ENCODE measurements at regions of chr1 and their contacts with region 1.

Region 1: DNA sequence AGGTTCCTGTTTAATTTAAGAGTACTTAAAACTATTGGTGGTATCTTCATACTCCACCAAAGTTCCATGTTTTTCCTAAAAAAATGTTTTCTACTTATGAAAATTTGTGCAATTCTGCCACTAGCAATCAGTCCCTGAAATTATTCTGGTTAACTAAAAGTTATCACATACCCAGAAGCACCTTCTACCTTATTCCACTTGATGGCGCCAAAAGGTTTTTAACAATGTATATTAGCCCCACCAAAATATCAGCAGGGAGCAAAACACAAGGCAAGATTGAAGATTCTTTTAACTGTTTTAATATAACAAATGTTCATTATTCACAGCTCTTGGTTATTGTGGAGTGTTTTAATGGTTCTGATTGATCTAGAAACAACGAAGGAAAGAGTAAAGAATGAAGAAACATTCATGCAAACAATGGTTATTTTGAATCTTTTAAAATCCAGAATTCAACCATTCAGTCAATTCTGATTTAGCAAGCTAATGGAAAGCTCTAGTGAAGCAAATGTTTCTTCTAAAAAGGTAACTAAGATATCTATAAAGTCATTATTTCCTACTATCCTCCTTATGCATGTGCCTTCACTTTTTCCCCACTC is 67.2 kb downstream of the TTLL7 start:
- DNase-seq: no peak
- ATAC-seq: no peak
- H3K4me3 ChIP-seq: no peak overlapping the region
- H3K27ac ChIP-seq: no peak overlapping the region
- H3K4me1 ChIP-seq: peaks cover 3 to 4% of the 10 kb centered on the region in 2 donors
- H3K27me3 ChIP-seq: no peaks in the 10 kb centered on the region

Region 2: GRCh38 chr1:83606416-83606955 is 325.3 kb before region 1 on chr1:
- intact Hi-C with region 1: no loop called
- DNase-seq: no peak
- ATAC-seq: no peak
- H3K4me3 ChIP-seq: no peak overlapping the region
- H3K27ac ChIP-seq: no peak overlapping the region
- H3K4me1 ChIP-seq: no peaks in the 10 kb centered on the region
- H3K27me3 ChIP-seq: no peaks in the 10 kb centered on the region

Region 3: DNA sequence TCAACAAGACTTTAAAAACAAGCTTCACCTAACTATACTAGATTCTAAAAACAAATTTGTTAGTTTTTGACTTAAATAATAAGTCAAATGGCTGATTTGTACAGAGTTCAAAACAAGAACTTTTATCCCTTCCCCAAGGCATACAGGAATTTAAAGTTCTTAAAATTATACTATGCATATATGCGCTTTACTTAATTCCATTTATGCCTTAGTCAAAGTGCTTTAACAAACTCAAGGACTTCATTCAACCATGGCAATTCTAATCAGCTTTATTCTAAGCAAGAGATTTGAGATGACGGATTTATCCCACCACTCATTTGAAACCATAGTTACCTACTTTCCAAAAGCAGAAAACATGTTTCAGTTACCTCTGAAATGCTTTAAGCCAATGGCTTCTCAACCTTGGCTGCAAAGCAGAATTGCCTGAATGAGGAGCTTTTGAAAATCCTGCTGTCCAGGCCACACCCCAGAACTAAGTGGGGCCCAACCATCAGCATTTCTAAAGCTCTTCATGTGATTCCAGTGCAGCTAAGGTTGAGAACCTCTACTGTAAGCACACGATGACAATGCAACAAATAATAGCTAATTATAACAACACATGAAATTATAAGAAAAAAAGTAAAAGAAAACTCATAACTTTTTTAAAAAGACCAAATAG is 22.5 kb after region 1 on chr1:
- intact Hi-C with region 1: no loop called
- DNase-seq: no peak
- ATAC-seq: no peak
- H3K4me3 ChIP-seq: no peak overlapping the region
- H3K27ac ChIP-seq: peak overlapping the region in 1 of 2 donors; percentile 51
- H3K4me1 ChIP-seq: peaks cover 1 to 6% of the 10 kb centered on the region in 2 donors
- H3K27me3 ChIP-seq: no peaks in the 10 kb centered on the region

Region 4: DNA sequence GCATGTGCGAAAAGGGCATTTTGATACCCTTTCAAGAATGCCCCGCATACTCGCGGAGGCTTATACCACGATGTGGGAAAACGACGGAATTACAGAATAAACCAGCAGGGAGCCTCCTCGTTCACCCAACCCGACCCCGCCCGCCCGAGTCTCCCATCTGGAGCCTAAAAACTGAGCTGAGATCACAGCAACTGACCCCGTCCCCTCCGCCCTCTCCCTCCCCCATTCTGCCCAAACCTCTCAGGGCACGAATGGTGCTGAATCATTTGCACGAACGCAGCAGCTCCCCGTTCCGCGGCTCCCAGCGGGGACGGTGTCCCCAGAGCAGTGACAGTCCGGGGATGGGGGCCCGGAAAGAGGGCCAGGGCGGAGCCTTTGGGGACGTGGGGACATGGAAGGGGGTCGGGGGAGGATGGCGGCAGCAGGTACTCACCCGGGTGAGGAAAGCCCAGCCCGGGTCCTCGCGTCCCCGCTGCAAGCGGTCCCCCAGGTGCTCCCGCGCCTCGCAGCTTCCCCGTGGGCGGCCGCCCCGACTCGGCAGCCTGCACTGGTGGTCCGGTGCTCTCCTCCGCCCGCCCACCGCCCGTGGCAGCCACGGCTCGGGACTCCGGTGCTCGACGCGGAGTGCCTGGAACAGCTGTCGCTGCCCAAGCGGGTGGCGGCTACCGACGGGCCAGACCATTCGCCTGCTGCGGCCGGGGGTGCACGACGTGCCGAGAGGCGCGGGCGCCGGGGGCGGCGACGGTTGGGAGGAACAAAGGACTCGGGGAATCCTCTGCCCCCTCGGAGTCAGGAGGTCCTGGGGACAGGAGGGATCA is 67.0 kb after region 1 on chr1 and contains the start of gene TTLL7:
- intact Hi-C with region 1: loop called (anchors 2 to 10 kb)
- DNase-seq: peak; percentile 89 to 95
- ATAC-seq: peak; percentile 94
- H3K4me3 ChIP-seq: peak within 1 kb of the TSS; percentile 95 to 100
- H3K27ac ChIP-seq: peak within 1 kb of the TSS; percentile 57 to 92
- H3K4me1 ChIP-seq: peaks cover 0 to 2% of the 10 kb centered on the region in 2 donors
- H3K27me3 ChIP-seq: no peaks in the 10 kb centered on the region
- total RNA-seq, gene TTLL7: 80.2 to 107 TPM

Region 5: GRCh38 chr1:84077476-84078107 is 145.8 kb after region 1 on chr1:
- intact Hi-C with region 1: loop called in 1 of 2 experiments (anchors 5 kb)
- DNase-seq: peak; percentile 76 to 92
- ATAC-seq: peak; percentile 98
- H3K4me3 ChIP-seq: peak overlapping the region; percentile 91 to 98
- H3K27ac ChIP-seq: peak overlapping the region; percentile 92 to 95
- H3K4me1 ChIP-seq: peaks cover 0 to 2% of the 10 kb centered on the region in 2 donors
- H3K27me3 ChIP-seq: no peaks in the 10 kb centered on the region

Region 6: GRCh38 chr1:84122780-84123382 is 191.1 kb after region 1 on chr1:
- intact Hi-C with region 1: loop called (anchors 2 kb)
- DNase-seq: peak in 1 of 2 donors; percentile 55
- ATAC-seq: no peak
- H3K4me3 ChIP-seq: no peak overlapping the region
- H3K27ac ChIP-seq: no peak overlapping the region
- H3K4me1 ChIP-seq: no peaks in the 10 kb centered on the region
- H3K27me3 ChIP-seq: no peaks in the 10 kb centered on the region

Region 7: DNA sequence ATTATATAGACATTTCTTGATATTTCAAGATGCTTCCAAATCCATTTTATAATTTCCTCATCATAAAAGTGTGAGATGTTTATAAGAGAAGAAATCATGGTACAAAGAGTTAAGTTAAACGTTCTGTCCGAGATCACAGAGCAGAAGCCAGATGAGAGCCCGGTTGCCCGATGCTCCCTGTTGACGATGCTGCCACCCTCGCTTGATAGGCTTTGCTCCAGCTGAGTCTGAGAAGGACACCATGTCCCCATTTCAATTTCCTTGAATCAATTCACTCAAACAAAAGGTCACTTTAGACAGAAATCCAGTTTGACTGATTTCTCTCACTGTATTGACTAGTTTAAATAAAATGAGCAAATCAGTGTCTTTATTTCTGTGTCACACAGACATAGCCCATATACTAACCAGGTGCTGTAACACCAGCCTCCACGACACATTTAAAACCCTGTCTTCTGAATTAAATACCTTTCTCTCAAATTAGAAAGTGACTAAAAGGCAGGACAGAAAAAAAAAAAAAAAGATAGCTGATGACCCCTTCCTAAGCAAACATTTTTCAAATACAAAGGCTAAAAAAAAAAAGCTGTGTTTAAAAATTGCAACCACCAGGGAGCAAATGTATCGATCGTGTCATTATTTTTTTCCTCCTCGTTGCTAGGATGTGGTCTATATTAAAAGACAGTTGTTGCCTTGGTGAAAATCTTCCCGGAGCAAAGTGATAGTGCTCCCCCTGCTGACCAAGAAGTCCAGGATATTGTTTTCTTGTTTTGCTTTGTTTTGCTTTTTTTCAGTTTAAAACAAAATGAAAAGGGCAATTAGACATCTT is 501.7 kb after region 1 on chr1:
- intact Hi-C with region 1: loop called in 1 of 2 experiments (anchors 10 kb)
- DNase-seq: no peak
- ATAC-seq: peak; percentile 90
- H3K4me3 ChIP-seq: no peak overlapping the region
- H3K27ac ChIP-seq: no peak overlapping the region
- H3K4me1 ChIP-seq: no peaks in the 10 kb centered on the region
- H3K27me3 ChIP-seq: no peaks in the 10 kb centered on the region

Measured in aorta (tissue), 5 donors.